H1 (cell line): ENCODE measurements at regions of chr19 and their contacts with region 1.

Region 1: DNA sequence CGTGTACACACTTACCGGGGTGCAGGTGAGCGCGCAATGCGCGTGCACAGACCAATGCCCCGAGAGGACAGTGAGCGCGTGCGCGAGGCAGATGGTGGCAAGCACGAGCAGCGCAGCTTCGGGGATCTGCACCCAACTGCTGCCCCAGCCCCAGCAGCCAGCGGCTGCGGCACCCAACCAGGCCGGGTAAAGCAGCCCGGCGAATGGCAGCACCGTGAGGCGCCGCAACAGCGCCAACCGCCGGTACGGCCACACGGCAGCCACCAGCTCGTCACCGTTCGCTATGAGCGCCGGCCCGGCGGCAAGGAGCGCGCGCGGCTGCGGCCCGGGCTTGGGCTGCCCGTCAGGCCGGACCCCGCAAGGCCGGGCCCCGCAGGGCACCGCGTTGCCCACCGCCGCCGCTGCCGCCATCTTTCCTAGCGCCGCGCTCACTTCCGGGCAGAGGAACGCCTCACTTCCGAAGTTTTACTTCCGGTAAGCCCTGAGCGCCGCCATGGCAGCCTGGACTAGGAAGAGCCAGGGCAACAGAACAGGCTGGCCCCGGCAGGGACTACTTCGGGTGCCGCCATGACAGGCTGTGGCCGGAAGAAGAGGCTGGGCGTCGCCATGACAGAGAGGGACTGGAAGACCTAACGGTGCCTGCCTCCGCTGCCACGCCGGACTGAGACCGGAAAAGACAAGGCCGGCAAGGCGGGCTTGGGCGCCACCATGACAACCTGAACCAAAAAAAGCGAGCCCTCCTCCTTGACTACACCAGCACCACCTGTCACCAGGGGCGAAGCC is at the start of gene ATP13A1:
- DNase-seq: peak; percentile 89 to 92
- H3K4me3 ChIP-seq: peak within 1 kb of the TSS; percentile 77 to 97 (median 90)
- H3K27ac ChIP-seq: peak within 1 kb of the TSS; percentile 91
- H3K4me1 ChIP-seq: peaks cover 5 to 13% (median 6%) of the 10 kb centered on the region in 4 experiments; a peak in 6 of 7 replicates
- H3K27me3 ChIP-seq: no peaks in the 10 kb centered on the region
- CTCF ChIP-seq: peak in 2 of 3 experiments; percentile 1 to 9; a peak in 1 of 4 replicates
- EP300 ChIP-seq: 0 out of 3 replicates have a peak, but pooled peaks of 1 of the 2 experiments have one; percentile 27
- POLR2A ChIP-seq: peak in 1 of 2 experiments; percentile 76; a peak in 2 of 3 replicates
- RAD21 ChIP-seq: no peak
- total RNA-seq, gene ATP13A1: 64.2 and 75.7 TPM in 2 replicates

Region 2: GRCh38 chr19:19568802-19569756 is 94.4 kb before region 1 on chr19:
- CTCF ChIA-PET with region 1: no interaction called
- POLR2A ChIA-PET with region 1: no interaction called
- DNase-seq: no peak
- H3K4me3 ChIP-seq: no peak overlapping the region
- H3K27ac ChIP-seq: no peak overlapping the region
- H3K4me1 ChIP-seq: peaks cover 0 to 6% (median 0%) of the 10 kb centered on the region in 4 experiments; a peak in 3 of 7 replicates
- H3K27me3 ChIP-seq: no peaks in the 10 kb centered on the region
- CTCF ChIP-seq: no peak
- EP300 ChIP-seq: no peak
- POLR2A ChIP-seq: no peak
- RAD21 ChIP-seq: no peak

Region 3: GRCh38 chr19:19627621-19628500 is 35.6 kb before region 1 on chr19 and contains the start of gene LPAR2:
- CTCF ChIA-PET with region 1: no interaction called
- POLR2A ChIA-PET with region 1: interaction called, 14 read pairs
- DNase-seq: peak in 1 of 2 experiments; percentile 89
- H3K4me3 ChIP-seq: peak within 1 kb of the TSS; percentile 69 to 82 (median 74)
- H3K27ac ChIP-seq: peak within 1 kb of the TSS; percentile 72; the same call in 1 of the 2 replicates
- H3K4me1 ChIP-seq: peaks cover 0 to 11% (median 8%) of the 10 kb centered on the region in 4 experiments; a peak in 5 of 7 replicates
- H3K27me3 ChIP-seq: no peaks in the 10 kb centered on the region
- CTCF ChIP-seq: no peak
- EP300 ChIP-seq: no peak
- POLR2A ChIP-seq: peak; percentile 66 to 90
- RAD21 ChIP-seq: no peak
- total RNA-seq, gene LPAR2: 47.1 and 47.6 TPM in 2 replicates

Region 4: GRCh38 chr19:19691683-19692082 is 28.2 kb after region 1 on chr19:
- CTCF ChIA-PET with region 1: no interaction called
- POLR2A ChIA-PET with region 1: interaction called, 14 read pairs
- DNase-seq: no peak
- H3K4me3 ChIP-seq: no peak overlapping the region
- H3K27ac ChIP-seq: no peak overlapping the region
- H3K4me1 ChIP-seq: no peaks in the 10 kb centered on the region
- H3K27me3 ChIP-seq: no peaks in the 10 kb centered on the region
- CTCF ChIP-seq: no peak
- EP300 ChIP-seq: no peak
- POLR2A ChIP-seq: no peak
- RAD21 ChIP-seq: no peak

Region 5: DNA sequence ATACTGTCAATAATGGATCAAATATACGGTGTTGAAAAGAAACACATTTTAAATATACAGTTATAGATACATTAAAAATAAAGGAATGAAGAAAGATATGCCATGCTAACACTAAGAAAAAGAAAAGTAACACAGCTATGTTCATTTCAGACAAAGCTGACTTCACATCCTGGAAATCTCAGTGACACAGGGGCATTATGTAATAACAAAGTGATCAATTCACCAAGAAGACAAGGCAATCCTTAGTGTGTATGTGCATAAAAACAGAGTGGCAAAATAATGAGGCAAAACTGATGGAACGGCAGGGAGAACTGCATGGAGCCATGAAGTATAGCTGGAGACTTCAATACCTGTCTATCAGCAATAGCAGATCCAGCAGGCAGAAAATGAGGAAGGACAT is 56.4 kb after region 1 on chr19:
- CTCF ChIA-PET with region 1: no interaction called
- POLR2A ChIA-PET with region 1: no interaction called
- DNase-seq: no peak
- H3K4me3 ChIP-seq: no peak overlapping the region
- H3K27ac ChIP-seq: no peak overlapping the region
- H3K4me1 ChIP-seq: no peaks in the 10 kb centered on the region
- H3K27me3 ChIP-seq: no peaks in the 10 kb centered on the region
- CTCF ChIP-seq: no peak
- EP300 ChIP-seq: no peak
- POLR2A ChIP-seq: no peak
- RAD21 ChIP-seq: no peak

Region 6: GRCh38 chr19:19776041-19777008 is 112.9 kb after region 1 on chr19:
- CTCF ChIA-PET with region 1: no interaction called
- POLR2A ChIA-PET with region 1: interaction called, 18 read pairs
- DNase-seq: peak; percentile 94 to 98
- H3K4me3 ChIP-seq: peak overlapping the region; percentile 79 to 94 (median 91)
- H3K27ac ChIP-seq: peak overlapping the region; percentile 53; the same call in 1 of the 2 replicates
- H3K4me1 ChIP-seq: peaks cover 0 to 7% (median 0%) of the 10 kb centered on the region in 4 experiments; a peak in 2 of 7 replicates
- H3K27me3 ChIP-seq: no peaks in the 10 kb centered on the region
- CTCF ChIP-seq: peak in 1 of 3 experiments; percentile 2; a peak in 1 of 4 replicates
- EP300 ChIP-seq: no peak
- POLR2A ChIP-seq: peak; percentile 13 to 64
- RAD21 ChIP-seq: no peak; a peak in 1 of 4 replicates

Region 7: DNA sequence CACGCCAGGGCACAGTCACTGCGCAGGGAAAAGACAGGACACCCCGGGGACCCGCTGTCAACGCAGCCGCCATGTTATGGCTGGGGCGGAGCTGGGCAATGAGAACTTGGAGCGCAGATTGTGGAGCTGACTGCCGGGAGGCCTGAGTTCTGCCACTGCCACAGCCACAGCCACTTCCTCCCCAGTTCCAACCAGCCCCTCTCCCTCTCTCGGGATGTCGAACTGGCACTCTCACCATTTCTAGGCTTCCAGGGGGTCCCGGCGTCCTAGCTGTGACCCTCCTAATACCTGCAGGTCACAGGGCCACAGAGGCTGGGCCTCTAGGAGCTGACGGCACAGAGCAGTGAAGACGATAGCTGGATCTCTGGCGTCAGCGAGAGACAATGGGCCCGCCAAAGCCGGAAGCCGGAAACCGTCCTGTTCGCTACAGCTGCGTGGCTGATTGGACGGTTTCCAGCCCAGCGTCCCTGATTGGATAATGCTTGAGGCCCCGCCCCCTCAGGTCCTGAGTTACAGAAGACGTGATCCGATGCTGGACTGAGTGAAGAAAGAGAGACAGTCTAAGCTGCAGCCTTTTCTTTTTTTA is 158.0 kb after region 1 on chr19 and contains the start of gene ZNF506:
- CTCF ChIA-PET with region 1: interaction called, 3 read pairs
- POLR2A ChIA-PET with region 1: interaction called, 14 read pairs
- DNase-seq: peak; percentile 79 to 82
- H3K4me3 ChIP-seq: peak within 1 kb of the TSS; percentile 94 to 100 (median 99)
- H3K27ac ChIP-seq: peak within 1 kb of the TSS; percentile 94
- H3K4me1 ChIP-seq: no peaks in the 10 kb centered on the region
- H3K27me3 ChIP-seq: no peaks in the 10 kb centered on the region
- CTCF ChIP-seq: no peak
- EP300 ChIP-seq: no peak
- POLR2A ChIP-seq: peak; percentile 82 to 92
- RAD21 ChIP-seq: no peak
- total RNA-seq, gene ZNF506: 8.0 and 8.3 TPM in 2 replicates

Region 8: DNA sequence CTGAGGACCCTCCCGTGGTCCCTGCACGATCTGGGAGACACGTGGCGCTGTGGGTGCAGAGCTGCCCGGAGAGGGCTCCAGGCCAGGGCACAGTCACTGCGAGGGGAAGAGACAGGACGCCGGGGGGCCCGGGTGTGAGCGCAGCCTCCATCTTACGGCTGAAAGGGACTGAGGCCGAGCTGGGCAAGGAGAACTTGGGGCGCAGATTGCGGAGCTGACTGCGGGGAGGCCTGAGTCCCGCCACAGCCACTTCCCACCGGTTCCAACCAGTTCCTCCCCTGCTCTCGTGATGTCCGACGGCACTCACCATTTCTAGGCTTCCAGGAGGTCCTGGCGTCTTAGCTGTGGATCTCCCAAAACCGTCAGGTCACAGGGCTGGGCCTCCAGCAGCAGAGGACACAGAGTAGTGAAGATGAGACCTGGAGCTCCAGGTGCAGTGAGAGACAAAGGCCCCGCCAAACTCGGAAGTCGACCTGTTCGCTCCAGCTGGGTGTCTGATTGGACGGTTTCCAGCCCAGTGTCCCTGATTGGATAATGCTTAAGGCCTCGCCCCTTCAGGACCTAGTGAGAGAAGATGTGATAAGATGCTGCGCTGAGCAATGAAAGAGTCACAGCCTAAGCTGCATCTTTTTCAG is 197.4 kb after region 1 on chr19:
- CTCF ChIA-PET with region 1: no interaction called
- POLR2A ChIA-PET with region 1: interaction called, 16 read pairs
- DNase-seq: peak; percentile 87 to 93
- H3K4me3 ChIP-seq: peak overlapping the region; percentile 82 to 98 (median 94)
- H3K27ac ChIP-seq: peak overlapping the region; percentile 95
- H3K4me1 ChIP-seq: peaks cover 0 to 5% (median 0%) of the 10 kb centered on the region in 4 experiments; a peak in 3 of 7 replicates
- H3K27me3 ChIP-seq: no peaks in the 10 kb centered on the region
- CTCF ChIP-seq: no peak
- EP300 ChIP-seq: no peak
- POLR2A ChIP-seq: peak; percentile 96 to 99
- RAD21 ChIP-seq: no peak

Region 9: GRCh38 chr19:19865739-19866481 is 202.5 kb after region 1 on chr19 and contains the start of gene ZNF253:
- CTCF ChIA-PET with region 1: no interaction called
- POLR2A ChIA-PET with region 1: interaction called, 16 read pairs
- DNase-seq: peak; percentile 91 to 97
- H3K4me3 ChIP-seq: peak within 1 kb of the TSS; percentile 84 to 99 (median 90)
- H3K27ac ChIP-seq: peak within 1 kb of the TSS; percentile 100
- H3K4me1 ChIP-seq: peaks cover 0 to 3% (median 1%) of the 10 kb centered on the region in 4 experiments; a peak in 2 of 7 replicates
- H3K27me3 ChIP-seq: no peaks in the 10 kb centered on the region
- CTCF ChIP-seq: no peak; a peak in 1 of 4 replicates
- EP300 ChIP-seq: no peak
- POLR2A ChIP-seq: peak; percentile 99 to 100
- RAD21 ChIP-seq: 0 out of 4 replicates have a peak, but pooled peaks of 1 of the 2 experiments have one; percentile 4
- total RNA-seq, gene ZNF253: 64.0 and 74.6 TPM in 2 replicates